ENCODE measurements at regions of chr15 and their contacts with region 1.

Region 1: GRCh38 chr15:97909291-97909891 is 51.1 kb upstream of the ARRDC4 start:
- DNase-seq: peak; percentile 88

Region 2: DNA sequence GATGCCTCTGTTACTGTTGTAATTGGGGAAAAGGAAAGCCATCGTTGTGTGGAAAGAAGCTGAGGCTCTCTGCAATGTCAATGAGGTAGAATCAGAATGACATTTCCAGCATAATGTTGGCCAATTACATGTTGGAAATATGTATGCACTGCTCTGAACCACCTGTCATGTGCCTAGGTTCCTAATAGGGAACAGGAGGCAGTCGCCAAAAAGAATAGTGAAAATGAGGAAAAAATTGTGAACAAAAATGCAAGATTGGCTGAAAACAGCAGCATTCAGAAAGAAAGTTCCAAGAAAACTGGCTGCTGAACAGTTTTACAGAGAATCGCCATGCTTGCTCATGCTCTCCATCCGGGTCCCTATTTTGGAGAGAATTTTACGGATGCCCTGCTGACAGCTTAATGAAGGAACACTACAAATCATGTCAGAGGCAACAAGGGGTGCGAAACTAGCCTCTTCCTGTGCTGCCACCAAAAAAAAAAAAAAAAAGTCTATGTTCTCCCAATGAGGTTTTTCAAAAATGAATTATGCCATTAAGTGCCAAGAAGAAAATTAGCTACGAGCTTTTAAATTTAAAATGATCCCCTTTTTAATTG is 254.8 kb before region 1 on chr15:
- intact Hi-C with region 1: no loop called
- DNase-seq: no peak

Region 3: GRCh38 chr15:97875513-97876280 is 33.7 kb before region 1 on chr15:
- intact Hi-C with region 1: no loop called
- DNase-seq: no peak

Region 4: GRCh38 chr15:97929456-97929855 is 20.1 kb after region 1 on chr15:
- intact Hi-C with region 1: loop called in 1 of 2 experiments (anchors 1 kb)
- DNase-seq: no peak

Region 5: DNA sequence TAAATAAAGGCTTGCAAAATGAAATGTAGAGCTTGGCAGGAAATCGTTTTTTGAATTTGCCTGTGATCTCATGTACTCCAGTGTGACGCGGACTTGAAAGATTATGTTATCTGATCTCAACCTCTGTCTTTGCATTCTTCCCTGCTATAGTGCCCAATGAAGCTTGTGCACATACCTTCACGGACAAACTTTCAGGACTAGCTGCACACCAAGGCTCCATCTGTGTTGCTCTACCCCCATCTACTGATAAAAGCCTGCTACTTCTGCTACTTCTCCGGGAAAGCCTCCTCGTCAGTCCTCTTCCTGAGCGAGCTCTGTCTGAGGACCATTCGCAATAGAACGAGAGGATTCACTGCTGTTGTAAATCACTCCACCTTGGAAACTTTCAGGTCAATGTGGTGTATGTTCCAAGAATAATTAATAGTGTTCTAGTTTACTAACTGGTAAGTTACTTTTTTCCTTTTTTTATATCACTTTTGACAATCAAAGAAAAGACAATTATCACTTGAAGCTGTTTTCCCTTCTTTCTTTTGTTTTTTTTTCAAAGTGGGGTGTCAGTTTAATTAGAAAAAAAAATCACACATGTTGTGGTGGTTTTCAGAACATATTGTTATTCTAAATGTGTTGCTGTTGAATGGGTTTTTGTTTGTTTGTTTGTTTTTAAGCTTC is 268.7 kb after region 1 on chr15:
- intact Hi-C with region 1: loop called (anchors 5 kb)
- DNase-seq: no peak

Region 6: DNA sequence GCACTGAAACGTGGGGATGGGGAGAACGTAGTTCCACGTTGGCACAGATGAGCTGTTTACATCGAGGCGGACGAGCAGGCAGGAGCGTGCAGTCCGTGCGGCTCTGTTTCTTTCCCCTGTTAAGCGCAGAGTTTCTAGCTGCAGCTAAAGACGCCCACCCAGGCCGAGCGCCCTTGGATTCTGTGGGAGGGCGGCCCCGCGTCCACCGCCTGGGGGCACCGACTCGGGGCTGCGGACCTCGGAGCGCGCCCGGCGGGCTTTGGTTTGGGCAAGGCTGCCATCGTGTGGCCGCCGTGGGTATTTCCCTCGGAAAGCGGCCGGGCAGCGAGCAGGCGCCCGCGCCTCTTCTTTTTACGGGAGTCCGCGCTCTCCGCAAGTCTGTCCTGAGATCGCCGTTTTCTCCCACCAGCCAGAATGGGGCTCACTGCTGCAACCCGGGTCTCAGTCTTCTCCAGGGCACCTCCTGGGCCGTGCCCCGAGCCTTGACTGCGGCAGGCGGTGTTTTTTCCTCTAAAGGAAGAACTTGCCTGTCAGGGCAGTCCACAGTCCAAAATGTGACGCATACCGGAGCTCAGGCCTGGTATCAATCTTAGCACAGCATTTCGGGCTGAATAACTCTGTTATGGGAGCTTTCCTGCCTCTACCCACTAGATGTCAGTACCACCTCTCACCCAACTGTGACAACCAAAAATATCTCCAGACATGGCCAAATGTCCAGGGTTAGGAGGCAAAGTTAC is 519.0 kb after region 1 on chr15:
- intact Hi-C with region 1: loop called in 1 of 2 experiments (anchors 10 kb)
- DNase-seq: peak; percentile 92